AG04449 (cell line): ENCODE measurements at regions of chr3 and their contacts with region 1.

Region 1: DNA sequence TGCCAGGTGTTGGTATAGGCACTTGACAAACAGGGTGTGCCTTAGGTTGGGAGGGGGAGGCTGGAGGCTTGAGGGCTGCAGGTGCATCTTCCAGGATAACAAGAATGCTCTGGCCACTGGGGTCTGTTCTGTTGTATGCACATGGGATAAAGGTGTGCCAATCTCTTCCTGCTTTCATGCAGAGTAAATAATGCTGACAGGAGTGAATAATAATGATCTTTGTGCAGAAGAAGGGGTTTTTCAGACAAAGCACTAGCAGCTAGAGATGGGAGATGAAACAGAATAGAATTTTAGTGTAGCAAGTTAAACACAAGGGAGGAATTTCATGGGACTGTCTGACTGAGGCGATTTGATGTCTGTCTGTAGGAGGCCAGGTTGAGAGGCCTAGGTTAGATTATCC is 1.9 kb upstream of the ROPN1 start:
- DNase-seq: no peak
- H3K4me3 ChIP-seq: no peak overlapping the region
- CTCF ChIP-seq: no peak

Region 2: DNA sequence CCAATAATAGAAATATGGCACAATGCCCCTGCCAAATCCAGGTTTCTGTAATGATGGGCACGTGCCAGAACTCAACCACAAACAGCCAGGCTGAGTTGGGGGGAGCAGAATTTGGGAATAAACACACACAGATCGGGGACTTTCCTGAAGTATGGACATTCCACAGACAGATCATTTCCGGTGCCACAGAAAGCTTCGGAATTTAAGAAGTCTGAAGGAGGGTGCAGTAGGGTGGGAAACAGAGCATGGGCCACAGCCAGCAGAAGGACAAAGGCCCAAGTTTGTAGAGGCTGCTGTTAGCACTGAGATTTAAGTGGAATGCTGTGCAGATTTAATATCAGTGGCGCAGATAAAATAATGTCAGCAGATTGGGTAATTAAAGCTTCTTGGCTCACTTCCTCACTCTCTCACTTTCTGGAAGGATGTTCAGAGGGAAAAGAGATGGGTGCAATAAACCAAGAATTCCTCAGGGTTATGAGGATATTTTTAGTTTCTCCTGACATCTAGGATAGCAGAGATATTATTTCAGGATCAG is 177.1 kb before region 1 on chr3:
- CTCF ChIA-PET with region 1: no interaction called
- POLR2A ChIA-PET with region 1: no interaction called
- DNase-seq: peak; percentile 98
- H3K4me3 ChIP-seq: no peak overlapping the region
- CTCF ChIP-seq: no peak

Region 3: DNA sequence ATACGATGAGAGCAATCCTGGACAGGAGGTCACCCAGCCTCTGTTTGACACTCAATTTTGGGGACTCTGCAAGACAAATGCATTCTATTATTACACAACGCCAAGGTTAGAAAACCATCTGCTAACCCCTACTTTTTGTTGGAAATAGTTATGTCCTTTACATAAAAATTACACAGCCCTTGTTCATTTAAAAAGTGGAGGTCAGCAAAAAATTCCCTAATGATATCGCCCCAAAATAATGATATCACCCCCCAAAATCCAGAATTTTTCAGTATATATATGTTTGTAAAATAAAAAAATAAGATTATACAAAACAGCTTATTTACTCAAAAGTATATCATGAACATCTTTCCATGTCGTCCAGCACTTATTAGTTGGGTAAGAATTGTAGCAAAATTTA is 13.3 kb before region 1 on chr3:
- CTCF ChIA-PET with region 1: interaction called, 19 read pairs
- POLR2A ChIA-PET with region 1: no interaction called
- DNase-seq: no peak
- H3K4me3 ChIP-seq: no peak overlapping the region
- CTCF ChIP-seq: no peak

Region 4: GRCh38 chr3:124044956-124045355 is 51.1 kb after region 1 on chr3:
- CTCF ChIA-PET with region 1: no interaction called
- POLR2A ChIA-PET with region 1: no interaction called
- DNase-seq: no peak
- H3K4me3 ChIP-seq: no peak overlapping the region
- CTCF ChIP-seq: no peak